CD14-positive monocyte (primary cell): ENCODE measurements at regions of chr5 and their contacts with region 1.

Region 1: DNA sequence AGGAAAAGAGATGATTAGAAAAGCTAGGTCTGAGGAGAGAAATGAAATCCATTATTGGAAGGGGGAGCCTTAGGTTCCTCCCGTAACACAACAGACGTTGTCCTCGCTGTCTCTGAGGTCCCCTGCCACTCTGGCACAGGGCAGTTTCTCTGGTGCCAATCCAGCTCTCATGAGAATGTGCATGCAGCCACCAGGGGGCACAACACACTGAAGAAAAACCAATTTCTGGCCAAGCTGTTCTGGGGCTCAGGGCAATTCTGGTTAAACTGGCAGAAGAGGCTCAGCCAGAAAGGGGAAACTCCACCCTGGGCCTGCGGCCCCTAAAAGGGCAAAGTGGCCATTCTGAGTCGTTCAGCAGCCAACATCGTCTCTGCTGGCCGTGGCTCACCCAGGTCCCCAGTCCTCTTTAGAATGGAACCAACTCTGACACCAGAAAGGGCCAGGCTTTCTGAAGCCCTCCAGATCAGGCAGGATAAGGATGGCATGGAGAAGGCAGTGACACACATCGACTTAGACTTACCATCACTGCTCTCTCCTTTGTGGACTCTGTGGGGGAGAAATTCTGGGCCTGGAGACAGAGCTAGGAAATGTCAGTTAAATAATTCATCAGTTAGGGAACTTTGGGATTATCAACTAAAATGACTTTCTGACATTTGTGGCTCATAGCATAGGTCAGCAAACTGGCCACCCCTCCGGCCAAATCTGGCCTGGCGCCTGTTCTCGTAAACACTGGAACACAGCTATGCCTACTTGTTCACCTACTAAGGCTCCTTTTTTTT is 58.5 kb upstream of the GOLPH3 start:
- DNase-seq: peak; percentile 81 to 85 (median 83)
- H3K4me3 ChIP-seq: peak overlapping the region in 1 of 3 experiments; percentile 41
- H3K4me3 Mint-ChIP-seq: peak overlapping the region; percentile 34 to 73
- H3K27ac ChIP-seq: peak overlapping the region; percentile 56 to 76
- H3K27ac Mint-ChIP-seq: peak overlapping the region; percentile 79 to 94 (median 91)
- H3K4me1 ChIP-seq: peaks cover 49 to 50% of the 10 kb centered on the region in 2 donors
- H3K4me1 Mint-ChIP-seq: peaks cover 54% of the 10 kb centered on the region
- H3K27me3 ChIP-seq: no peaks in the 10 kb centered on the region
- H3K27me3 Mint-ChIP-seq: no peaks in the 10 kb centered on the region
- CTCF ChIP-seq: peak; percentile 89

Region 2: DNA sequence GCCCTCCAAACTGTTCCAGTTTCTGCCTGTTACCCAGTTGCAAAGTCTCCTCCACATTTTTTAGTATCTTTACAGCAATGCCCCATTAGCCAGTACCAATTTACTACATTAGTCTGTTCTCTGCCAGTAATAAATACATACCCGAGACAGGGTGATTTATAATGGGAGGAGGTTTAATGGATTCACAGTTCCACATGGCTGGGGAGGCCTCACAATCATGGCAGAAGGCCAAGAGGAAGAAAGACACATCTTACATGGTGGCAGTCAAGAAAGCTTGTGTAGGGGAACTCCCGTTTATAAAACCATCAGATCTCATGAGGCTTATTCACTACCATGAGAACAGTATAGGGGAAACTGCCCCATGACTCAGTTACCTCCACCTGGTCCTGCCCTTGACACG is 1639.8 kb before region 1 on chr5:
- intact Hi-C with region 1: no loop called
- DNase-seq: no peak
- H3K4me3 ChIP-seq: no peak overlapping the region
- H3K4me3 Mint-ChIP-seq: no peak overlapping the region
- H3K27ac ChIP-seq: no peak overlapping the region
- H3K27ac Mint-ChIP-seq: no peak overlapping the region
- H3K4me1 ChIP-seq: no peaks in the 10 kb centered on the region
- H3K4me1 Mint-ChIP-seq: no peaks in the 10 kb centered on the region
- H3K27me3 ChIP-seq: no peaks in the 10 kb centered on the region
- H3K27me3 Mint-ChIP-seq: no peaks in the 10 kb centered on the region
- CTCF ChIP-seq: no peak

Region 3: DNA sequence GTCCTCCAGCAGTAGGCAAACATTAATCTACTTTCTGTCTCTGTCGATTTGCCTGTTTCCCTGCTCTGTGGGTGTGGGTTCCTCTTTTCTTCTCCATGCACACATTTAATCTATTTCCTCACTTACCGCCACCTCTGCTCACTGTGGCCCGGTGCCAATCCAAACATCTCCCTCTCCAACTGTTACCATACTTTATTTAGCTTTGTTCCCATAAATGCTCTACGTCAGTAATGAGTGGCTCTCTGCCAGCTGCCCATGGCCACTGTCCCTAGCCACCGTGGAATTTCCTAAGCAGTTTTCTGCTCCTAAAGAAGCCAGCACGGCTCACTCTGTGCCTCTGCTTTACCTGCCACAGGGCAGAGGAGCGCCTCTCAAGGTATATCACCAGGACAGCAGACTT is 39.0 kb before region 1 on chr5:
- intact Hi-C with region 1: no loop called
- DNase-seq: peak; percentile 61 to 72 (median 62)
- H3K4me3 ChIP-seq: peak overlapping the region in 2 of 3 experiments; percentile 25 to 56
- H3K4me3 Mint-ChIP-seq: peak overlapping the region; percentile 66 to 85
- H3K27ac ChIP-seq: peak overlapping the region; percentile 32 to 47
- H3K27ac Mint-ChIP-seq: peak overlapping the region; percentile 24 to 87 (median 81)
- H3K4me1 ChIP-seq: peaks cover 12% of the 10 kb centered on the region in 2 donors
- H3K4me1 Mint-ChIP-seq: peaks cover 15% of the 10 kb centered on the region
- H3K27me3 ChIP-seq: no peaks in the 10 kb centered on the region
- H3K27me3 Mint-ChIP-seq: peaks cover 0 to 1% (median 0%) of the 10 kb centered on the region in 3 donors
- CTCF ChIP-seq: no peak

Region 4: GRCh38 chr5:32312647-32313523 is 80.3 kb after region 1 on chr5 and contains the start of gene MTMR12:
- intact Hi-C with region 1: loop called (anchors 5 to 10 kb)
- DNase-seq: peak; percentile 99
- H3K4me3 ChIP-seq: peak within 1 kb of the TSS; percentile 57 to 88 (median 82)
- H3K4me3 Mint-ChIP-seq: peak within 1 kb of the TSS; percentile 92 to 97
- H3K27ac ChIP-seq: peak within 1 kb of the TSS; percentile 48 to 86
- H3K27ac Mint-ChIP-seq: peak within 1 kb of the TSS; percentile 83 to 94 (median 87)
- H3K4me1 ChIP-seq: peaks cover 37 to 44% of the 10 kb centered on the region in 2 donors
- H3K4me1 Mint-ChIP-seq: peaks cover 40% of the 10 kb centered on the region
- H3K27me3 ChIP-seq: no peaks in the 10 kb centered on the region
- H3K27me3 Mint-ChIP-seq: peaks cover 1 to 5% (median 2%) of the 10 kb centered on the region in 3 donors
- CTCF ChIP-seq: no peak
- polyA plus RNA-seq, gene MTMR12: 10.3 to 19.0 (median 17.3) TPM

Region 5: GRCh38 chr5:32613050-32613672 is 380.5 kb after region 1 on chr5:
- intact Hi-C with region 1: loop called in 1 of 2 experiments (anchors 10 kb)
- DNase-seq: peak; percentile 74 to 81 (median 79)
- H3K4me3 ChIP-seq: no peak overlapping the region
- H3K4me3 Mint-ChIP-seq: no peak overlapping the region
- H3K27ac ChIP-seq: no peak overlapping the region
- H3K27ac Mint-ChIP-seq: no peak overlapping the region
- H3K4me1 ChIP-seq: no peaks in the 10 kb centered on the region
- H3K4me1 Mint-ChIP-seq: peaks cover 2% of the 10 kb centered on the region
- H3K27me3 ChIP-seq: no peaks in the 10 kb centered on the region
- H3K27me3 Mint-ChIP-seq: peaks cover 0 to 2% (median 0%) of the 10 kb centered on the region in 3 donors
- CTCF ChIP-seq: peak; percentile 96

Region 6: GRCh38 chr5:33470544-33470943 is 1237.9 kb after region 1 on chr5:
- intact Hi-C with region 1: no loop called
- DNase-seq: no peak
- H3K4me3 ChIP-seq: no peak overlapping the region
- H3K4me3 Mint-ChIP-seq: no peak overlapping the region
- H3K27ac ChIP-seq: peak overlapping the region; percentile 18 to 35
- H3K27ac Mint-ChIP-seq: peak overlapping the region in 4 of 7 donors; percentile 35 to 67 (median 55)
- H3K4me1 ChIP-seq: peaks cover 7 to 12% of the 10 kb centered on the region in 2 donors
- H3K4me1 Mint-ChIP-seq: peaks cover 14% of the 10 kb centered on the region
- H3K27me3 ChIP-seq: no peaks in the 10 kb centered on the region
- H3K27me3 Mint-ChIP-seq: no peaks in the 10 kb centered on the region
- CTCF ChIP-seq: no peak